ENCODE measurements at regions of chr17 and their contacts with region 1.

Region 1: DNA sequence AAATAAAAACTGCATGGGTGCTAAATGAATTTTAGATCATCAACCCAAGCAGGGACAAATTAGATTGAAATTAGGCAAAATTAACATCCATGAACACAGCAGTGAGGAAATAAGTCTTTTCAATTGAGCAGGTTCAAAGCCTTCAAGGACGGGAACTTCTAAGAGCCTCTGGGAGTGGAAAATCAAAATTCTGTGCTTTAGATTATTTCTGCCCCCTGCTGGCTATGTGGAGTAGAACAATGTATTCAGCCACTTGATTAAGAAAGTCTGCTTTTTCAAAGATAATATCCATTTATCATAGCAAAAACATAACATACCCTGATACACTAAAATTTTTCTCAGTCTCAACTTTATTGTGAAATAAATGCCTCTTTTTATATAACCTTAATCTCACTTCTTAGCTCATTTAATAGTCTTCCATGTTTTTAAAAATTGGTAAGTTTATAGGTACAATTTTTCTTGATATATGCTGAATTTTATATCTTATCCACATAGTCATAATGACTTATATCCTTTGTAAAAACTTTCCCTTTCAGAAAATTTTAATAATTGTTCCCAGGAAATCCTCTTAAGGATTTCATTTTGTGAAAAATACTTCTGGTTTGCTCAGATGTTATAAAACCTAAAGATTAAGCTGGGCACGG is 28.1 kb upstream of the NOL11 start:
- DNase-seq: peak; percentile 61 to 71 (median 68)
- ATAC-seq: peak; percentile 65; the same call in 2 of the 3 replicates
- H3K4me3 ChIP-seq: no peak overlapping the region
- H3K27ac ChIP-seq: no peak overlapping the region
- H3K4me1 ChIP-seq: no peaks in the 10 kb centered on the region; a peak in 1 of 5 replicates
- H3K27me3 ChIP-seq: peaks cover 27 to 32% of the 10 kb centered on the region in 2 experiments; a peak in 4 of 5 replicates
- CTCF ChIP-seq: peak; percentile 62 to 80 (median 71)
- EP300 ChIP-seq: no peak
- POLR2A ChIP-seq: no peak
- RAD21 ChIP-seq: peak; percentile 44 to 74

Region 2: GRCh38 chr17:67276075-67276474 is 413.6 kb before region 1 on chr17:
- CTCF ChIA-PET with region 1: no interaction called
- POLR2A ChIA-PET with region 1: no interaction called
- in situ Hi-C with region 1: no loop called
- intact Hi-C with region 1: loop called (anchors 5 kb)
- DNase-seq: peak in 1 of 4 experiments; percentile 52
- ATAC-seq: peak; percentile 77
- H3K4me3 ChIP-seq: no peak overlapping the region
- H3K27ac ChIP-seq: no peak overlapping the region
- H3K4me1 ChIP-seq: no peaks in the 10 kb centered on the region; a peak in 1 of 5 replicates
- H3K27me3 ChIP-seq: no peaks in the 10 kb centered on the region
- CTCF ChIP-seq: peak; percentile 45 to 57 (median 53); a peak in 5 of 6 replicates
- EP300 ChIP-seq: no peak
- POLR2A ChIP-seq: no peak
- RAD21 ChIP-seq: peak in 1 of 2 experiments; percentile 54; a peak in 2 of 4 replicates

Region 3: DNA sequence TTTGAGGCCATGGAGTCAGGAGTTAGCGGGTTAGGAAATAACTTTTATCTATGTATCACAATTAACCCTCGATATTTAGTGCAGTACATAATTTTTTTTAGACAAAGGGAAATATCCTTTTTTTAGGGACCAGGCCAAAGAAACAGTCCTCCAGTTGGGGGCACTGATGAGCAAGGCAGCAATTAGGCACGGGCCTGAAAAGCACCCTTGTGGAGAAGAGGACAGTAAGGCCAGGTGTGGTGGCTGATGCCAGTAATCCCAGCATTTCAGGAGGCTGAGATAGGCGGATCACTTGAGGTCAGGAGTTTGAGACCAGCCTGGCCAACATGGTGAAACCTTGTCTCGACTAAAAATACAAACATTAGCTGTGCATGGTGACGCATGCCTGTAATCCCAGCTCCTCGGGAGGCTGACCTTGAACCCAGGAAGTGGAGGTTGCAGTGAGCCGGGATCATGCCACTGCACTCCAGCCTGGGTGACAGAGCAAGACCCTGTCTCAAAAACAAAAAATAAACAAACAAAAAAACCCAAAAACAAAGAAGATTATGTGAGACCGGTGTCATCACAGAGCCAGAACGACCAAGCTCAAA is 130.2 kb before region 1 on chr17:
- CTCF ChIA-PET with region 1: no interaction called
- POLR2A ChIA-PET with region 1: no interaction called
- in situ Hi-C with region 1: no loop called
- intact Hi-C with region 1: loop called (anchors 1 kb)
- DNase-seq: peak in 3 of 4 experiments; percentile 20 to 43 (median 26)
- ATAC-seq: peak; percentile 79
- H3K4me3 ChIP-seq: no peak overlapping the region
- H3K27ac ChIP-seq: no peak overlapping the region
- H3K4me1 ChIP-seq: no peaks in the 10 kb centered on the region; a peak in 1 of 5 replicates
- H3K27me3 ChIP-seq: peaks cover 5 to 31% of the 10 kb centered on the region in 2 experiments; a peak in 4 of 5 replicates
- CTCF ChIP-seq: peak; percentile 59 to 73 (median 67)
- EP300 ChIP-seq: no peak
- POLR2A ChIP-seq: no peak
- RAD21 ChIP-seq: peak; percentile 16 to 51; a peak in 2 of 4 replicates

Region 4: GRCh38 chr17:68085767-68086381 is 396.2 kb after region 1 on chr17:
- CTCF ChIA-PET with region 1: no interaction called
- POLR2A ChIA-PET with region 1: no interaction called
- in situ Hi-C with region 1: no loop called
- intact Hi-C with region 1: no loop called
- DNase-seq: peak in 1 of 4 experiments; percentile 13
- ATAC-seq: peak; percentile 62
- H3K4me3 ChIP-seq: no peak overlapping the region
- H3K27ac ChIP-seq: no peak overlapping the region
- H3K4me1 ChIP-seq: peaks cover 0 to 6% of the 10 kb centered on the region in 2 experiments; a peak in 3 of 5 replicates
- H3K27me3 ChIP-seq: no peaks in the 10 kb centered on the region
- CTCF ChIP-seq: 0 out of 6 replicates have a peak, but pooled peaks of 1 of the 3 experiments have one; percentile 8
- EP300 ChIP-seq: no peak
- POLR2A ChIP-seq: no peak
- RAD21 ChIP-seq: 0 out of 4 replicates have a peak, but pooled peaks of 1 of the 2 experiments have one; percentile 5

Measured in K562 (cell line).